ENCODE measurements at regions of chr1 and their contacts with region 1.

Region 1: DNA sequence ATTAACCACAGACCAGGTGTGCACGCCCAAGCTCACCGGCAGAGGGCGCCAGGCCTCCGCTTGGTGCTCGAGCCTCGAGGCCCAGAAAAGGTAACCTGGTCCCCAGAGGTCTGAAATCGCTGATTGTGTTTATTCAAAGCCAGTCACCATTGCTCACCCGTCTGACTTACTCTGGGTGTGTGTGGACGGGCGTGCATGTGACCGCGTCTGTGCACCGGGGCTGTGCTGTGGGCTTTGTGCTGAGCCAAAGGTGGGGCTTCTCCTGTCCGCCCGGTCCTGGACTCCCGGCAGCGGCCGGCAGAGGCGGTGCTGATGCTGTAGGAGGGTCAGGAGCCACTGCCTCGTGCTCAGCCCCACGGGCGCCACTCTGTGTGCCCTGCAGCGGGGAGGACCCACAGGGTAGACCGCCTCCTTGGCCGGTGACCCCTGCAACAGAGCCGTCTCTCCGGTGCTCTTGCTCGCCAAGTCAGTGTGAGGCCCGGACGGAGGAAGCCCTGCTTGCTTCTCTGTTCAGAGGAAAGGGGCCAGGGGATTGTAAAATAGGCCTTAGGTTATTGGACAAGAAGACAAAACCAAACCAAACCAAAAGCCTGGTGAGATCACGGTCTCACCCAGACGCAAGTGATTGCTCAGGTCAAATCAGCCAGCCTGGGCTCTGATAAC is 32.0 kb upstream of the BTG2 start:
- DNase-seq: peak; percentile 94
- ATAC-seq: peak; percentile 74

Region 2: GRCh38 chr1:202957733-202958543 is 315.4 kb before region 1 on chr1 and contains the start of gene ADIPOR1:
- intact Hi-C with region 1: no loop called
- DNase-seq: peak; percentile 93
- ATAC-seq: peak; percentile 99
- total RNA-seq, gene ADIPOR1: 83.8 TPM

Region 3: GRCh38 chr1:203304919-203305808 is 31.8 kb after region 1 on chr1 and contains the start of gene BTG2:
- intact Hi-C with region 1: loop called (anchors 5 kb)
- DNase-seq: peak; percentile 97
- ATAC-seq: peak; percentile 92
- total RNA-seq, gene BTG2: 83.5 TPM

Region 4: GRCh38 chr1:203340112-203340804 is 66.9 kb after region 1 on chr1:
- intact Hi-C with region 1: loop called (anchors 2 kb)
- DNase-seq: peak; percentile 79
- ATAC-seq: peak; percentile 85

Region 5: DNA sequence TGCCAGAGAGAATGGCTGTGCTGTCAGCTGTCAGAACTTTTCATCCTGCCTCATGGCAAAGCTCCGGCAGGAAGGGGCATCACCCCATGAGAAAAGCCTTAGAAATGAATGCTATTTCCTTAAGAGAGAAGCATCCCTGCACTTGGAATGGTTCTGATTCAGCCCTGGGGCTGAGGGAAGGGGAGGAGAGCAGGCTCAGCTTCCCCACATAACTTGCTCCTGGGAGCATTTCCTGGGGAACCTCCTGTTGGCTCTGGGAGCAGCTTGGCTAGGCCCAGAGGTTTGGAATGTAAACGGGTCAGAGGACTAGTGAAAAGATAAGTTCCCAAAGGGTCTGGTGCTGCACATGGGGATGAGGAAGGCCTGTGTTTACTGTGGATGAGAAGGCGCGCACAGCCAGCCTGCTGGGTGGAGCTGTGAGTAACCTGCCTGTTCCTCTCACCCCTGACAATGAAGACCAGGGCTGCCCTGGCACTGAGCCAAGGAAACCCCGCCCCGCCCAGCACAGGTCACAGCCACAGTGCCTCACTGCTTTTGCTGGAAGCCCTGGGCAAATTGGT is 207.3 kb after region 1 on chr1:
- intact Hi-C with region 1: loop called (anchors 10 kb)
- DNase-seq: peak; percentile 87
- ATAC-seq: peak; percentile 57

Region 6: DNA sequence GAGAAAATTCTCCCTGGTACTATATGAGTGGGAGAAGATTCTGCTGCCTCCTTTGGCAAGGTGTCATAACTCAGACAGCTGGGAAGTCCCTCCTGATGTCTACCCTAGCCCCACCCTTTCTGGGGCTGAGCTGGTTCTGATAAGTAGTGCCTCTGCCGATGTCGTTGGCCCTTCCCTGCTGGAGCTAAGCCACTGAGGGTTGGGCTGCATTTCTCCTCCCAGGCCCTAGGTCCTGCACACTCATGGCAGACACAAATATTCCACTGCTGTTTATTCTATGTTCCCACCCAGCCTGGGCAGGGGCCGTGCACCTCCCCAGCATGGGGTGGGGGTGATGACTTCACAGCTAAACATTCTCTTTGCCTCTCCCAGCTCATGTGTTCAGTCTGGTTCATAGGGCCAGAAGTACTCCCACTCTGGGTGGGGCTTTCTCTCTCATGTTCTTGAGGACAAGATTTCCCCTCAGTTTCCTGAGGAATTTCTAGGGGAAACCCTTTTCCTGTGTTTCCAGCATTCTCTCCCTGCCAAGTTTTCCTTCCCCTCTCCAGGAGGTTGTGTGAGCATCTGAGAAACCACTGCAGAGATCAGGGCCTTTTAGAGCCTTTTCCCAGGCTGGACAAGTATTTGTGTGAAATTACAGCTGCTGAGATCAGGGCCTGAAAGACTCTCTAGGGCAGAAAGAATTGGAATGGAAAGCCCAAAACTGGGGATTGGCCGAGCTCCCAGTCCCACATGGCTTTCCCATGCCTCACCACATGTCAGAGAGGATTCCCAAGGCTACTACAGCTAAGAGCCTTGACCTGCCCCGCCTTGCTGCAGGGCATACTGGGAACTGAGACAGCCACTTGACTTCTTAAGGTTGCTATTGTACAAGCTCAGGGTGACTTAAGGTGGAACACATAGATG is 419.5 kb after region 1 on chr1:
- intact Hi-C with region 1: loop called (anchors 10 kb)
- DNase-seq: peak; percentile 88
- ATAC-seq: peak; percentile 95